Dendritic cell treated with granulocyte-macrophage colony-stimulating factor and Interleukin-4, amounts not matched to agents 40 ng/mL and 50 ng/mL, for 4 days (primary cell): ENCODE measurements at regions of chr10 and their contacts with region 1.

Region 1: GRCh38 chr10:7457478-7458316 is 46.9 kb upstream of the SFMBT2 start:
- H3K4me3 Mint-ChIP-seq: no peak overlapping the region
- H3K27ac Mint-ChIP-seq: peak overlapping the region; percentile 57
- H3K4me1 Mint-ChIP-seq: peaks cover 23% of the 10 kb centered on the region
- H3K27me3 Mint-ChIP-seq: no peaks in the 10 kb centered on the region

Region 2: DNA sequence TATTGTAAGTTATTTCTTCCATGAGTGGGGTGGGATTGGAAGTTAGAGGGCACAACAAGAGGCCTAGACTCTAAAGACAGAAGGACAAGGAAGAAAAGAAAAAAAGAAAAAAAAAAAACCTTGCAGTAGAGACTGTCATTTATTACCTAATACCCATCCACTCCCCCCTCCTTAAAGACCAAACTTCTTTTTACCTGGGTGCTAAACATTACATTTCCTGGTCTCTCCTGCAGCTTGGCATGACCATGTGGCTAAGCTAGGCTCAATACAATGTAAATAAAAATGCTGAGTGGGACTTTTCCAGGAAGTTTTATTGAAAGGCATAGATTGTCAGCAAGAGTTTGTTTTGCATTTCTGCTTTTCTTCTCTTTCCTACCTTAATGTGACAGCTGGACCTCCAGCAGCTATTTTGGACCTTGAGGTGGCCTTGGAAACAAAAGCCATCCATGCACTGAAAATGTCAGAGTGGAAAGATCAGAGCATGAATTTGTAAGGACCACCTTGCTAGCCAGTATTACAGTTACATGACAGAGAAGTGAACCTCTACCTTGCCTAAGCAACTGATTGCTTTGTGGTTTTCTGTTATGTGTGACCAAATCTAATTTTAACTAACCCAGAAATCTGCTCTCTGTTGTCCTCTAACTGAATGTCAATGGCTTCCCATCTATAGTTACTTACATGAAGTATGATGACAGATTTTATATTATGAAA is 34.4 kb after region 1 on chr10:
- intact Hi-C with region 1: loop called (anchors 5 kb)
- H3K4me3 Mint-ChIP-seq: no peak overlapping the region
- H3K27ac Mint-ChIP-seq: no peak overlapping the region
- H3K4me1 Mint-ChIP-seq: peaks cover 45% of the 10 kb centered on the region
- H3K27me3 Mint-ChIP-seq: no peaks in the 10 kb centered on the region

Region 3: DNA sequence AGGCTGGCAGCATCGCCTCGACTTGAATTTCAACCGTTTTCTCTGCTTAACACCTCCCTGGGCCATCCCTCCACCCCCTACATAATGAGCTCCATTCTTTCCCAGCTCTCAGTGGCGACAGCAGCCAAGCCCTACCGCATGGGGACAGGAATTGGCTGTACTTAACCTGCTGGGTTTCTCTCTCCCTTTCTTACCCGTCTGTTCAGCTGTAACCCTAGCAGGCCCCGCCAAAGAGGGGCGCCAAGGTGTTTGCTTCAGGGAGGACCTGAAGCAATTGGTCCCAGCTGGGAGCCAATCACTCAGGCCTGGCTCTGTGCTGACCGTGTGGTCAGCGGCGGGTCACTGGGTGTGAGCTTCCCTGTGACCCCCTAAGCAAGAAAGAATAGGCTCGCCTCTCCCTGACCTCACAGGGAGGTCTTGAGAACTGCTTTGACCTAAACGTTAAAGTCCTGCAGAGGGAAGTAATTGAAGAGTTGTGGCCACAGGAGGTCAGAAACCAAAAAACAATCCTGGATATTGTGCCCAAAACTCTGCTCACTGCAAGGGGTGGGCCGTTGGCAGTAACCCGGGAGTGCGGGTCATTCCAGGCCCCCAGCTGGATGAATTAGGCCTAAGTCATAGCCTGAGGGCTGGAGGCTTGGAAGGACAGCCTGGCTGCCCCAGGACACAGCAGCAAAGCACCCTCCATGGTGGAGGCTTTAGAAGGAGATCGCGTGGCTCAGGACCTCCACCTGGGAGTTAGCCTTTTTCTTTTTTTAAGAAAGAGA is 94.4 kb after region 1 on chr10:
- intact Hi-C with region 1: no loop called
- H3K4me3 Mint-ChIP-seq: no peak overlapping the region
- H3K27ac Mint-ChIP-seq: no peak overlapping the region
- H3K4me1 Mint-ChIP-seq: no peaks in the 10 kb centered on the region
- H3K27me3 Mint-ChIP-seq: peaks cover 6% of the 10 kb centered on the region